Adrenal gland (tissue), 19 donors: ENCODE measurements at regions of chr11 and their contacts with region 1.

Region 1: DNA sequence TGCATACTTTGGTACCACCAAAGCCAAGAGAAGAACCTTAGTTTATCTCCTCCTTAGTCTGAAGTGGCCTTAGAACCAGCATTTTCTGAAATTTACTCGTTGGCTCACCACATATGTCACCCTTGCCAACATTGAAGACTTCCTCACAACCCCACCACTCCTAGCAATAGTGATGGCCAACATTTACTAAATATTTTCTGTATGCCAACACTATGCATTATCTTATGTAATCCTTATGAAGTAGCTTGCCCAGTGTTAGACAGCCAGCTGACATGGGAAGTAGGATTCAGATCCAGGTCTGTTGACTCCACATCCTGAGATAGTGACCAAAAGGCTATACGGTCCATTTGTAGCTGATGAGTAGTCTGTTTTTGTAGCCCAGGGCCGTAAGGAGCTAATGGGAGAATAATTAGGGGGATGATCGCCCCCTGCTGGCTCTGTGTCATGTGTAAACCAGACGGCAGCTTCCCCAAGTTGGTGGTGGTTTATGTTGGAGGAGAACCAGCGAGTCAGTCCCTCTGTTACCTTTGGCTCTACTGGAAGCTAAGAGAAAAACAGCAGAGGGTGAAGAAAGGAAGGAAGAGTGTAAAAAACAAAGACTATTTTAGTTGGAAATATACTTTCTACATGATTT is 120.5 kb upstream of the RASSF10 start:
- DNase-seq: peak; percentile 76 to 96 (median 90)
- H3K4me3 ChIP-seq: no peak overlapping the region
- H3K27ac ChIP-seq: peak overlapping the region in 2 of 5 donors; percentile 45 to 78
- H3K4me1 ChIP-seq: peaks cover 0 to 11% of the 10 kb centered on the region in 2 donors
- H3K27me3 ChIP-seq: no peaks in the 10 kb centered on the region
- CTCF ChIP-seq: peak; percentile 59 to 82 (median 72)
- POLR2A ChIP-seq: no peak

Region 2: DNA sequence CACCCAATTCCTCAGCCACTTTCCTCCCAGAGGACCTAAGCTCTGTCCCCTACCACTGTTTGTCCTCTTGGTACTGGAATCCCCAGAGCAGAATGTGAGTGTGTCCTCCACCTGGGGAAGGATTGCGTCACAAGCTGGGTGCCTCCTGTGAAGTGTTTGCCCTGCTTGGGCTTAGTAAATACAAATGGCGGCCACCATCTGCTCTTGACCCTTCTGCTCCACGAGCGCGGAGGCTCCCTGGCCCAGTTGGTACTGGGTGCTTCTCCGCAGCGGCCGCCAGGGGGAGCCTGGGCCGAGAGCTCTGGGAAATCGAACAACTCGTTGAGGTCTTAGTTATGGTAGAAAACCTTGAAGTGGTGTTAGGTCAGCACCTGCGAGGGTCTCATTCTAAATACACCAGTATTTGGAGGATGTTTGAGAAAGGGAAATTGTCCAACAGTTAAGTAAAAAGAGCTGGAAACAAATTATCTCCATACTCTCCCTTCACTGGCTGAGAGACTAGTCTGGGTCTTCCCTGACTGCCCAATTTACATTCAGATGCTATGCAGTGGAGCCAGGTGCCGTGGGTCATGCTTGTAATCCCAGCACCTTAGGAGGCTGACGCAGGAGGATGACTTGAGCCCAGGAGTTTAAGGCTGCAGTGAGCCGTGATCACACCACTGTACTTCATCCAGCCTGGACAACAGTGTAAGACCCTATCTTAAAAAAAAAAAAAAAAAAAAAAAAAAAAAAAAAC is 289.1 kb before region 1 on chr11:
- intact Hi-C with region 1: loop called (anchors 2 to 10 kb)
- DNase-seq: peak; percentile 56 to 78 (median 64)
- H3K4me3 ChIP-seq: no peak overlapping the region
- H3K27ac ChIP-seq: no peak overlapping the region
- H3K4me1 ChIP-seq: peaks cover 0 to 8% of the 10 kb centered on the region in 2 donors
- H3K27me3 ChIP-seq: no peaks in the 10 kb centered on the region
- CTCF ChIP-seq: peak; percentile 62 to 83 (median 78)
- POLR2A ChIP-seq: no peak

Region 3: GRCh38 chr11:12673924-12674570 is 214.6 kb before region 1 on chr11 and contains the start of gene TEAD1:
- intact Hi-C with region 1: loop called (anchors 10 kb)
- DNase-seq: peak; percentile 95 to 99 (median 98)
- H3K4me3 ChIP-seq: peak within 1 kb of the TSS; percentile 28 to 93 (median 67)
- H3K27ac ChIP-seq: peak within 1 kb of the TSS; percentile 84 to 100 (median 89)
- H3K4me1 ChIP-seq: peaks cover 9 to 23% of the 10 kb centered on the region in 2 donors
- H3K27me3 ChIP-seq: no peaks in the 10 kb centered on the region
- CTCF ChIP-seq: no peak
- POLR2A ChIP-seq: peak; percentile 86 to 94
- total RNA-seq, gene TEAD1: 24.1 to 49.9 (median 44.0) TPM

Region 4: DNA sequence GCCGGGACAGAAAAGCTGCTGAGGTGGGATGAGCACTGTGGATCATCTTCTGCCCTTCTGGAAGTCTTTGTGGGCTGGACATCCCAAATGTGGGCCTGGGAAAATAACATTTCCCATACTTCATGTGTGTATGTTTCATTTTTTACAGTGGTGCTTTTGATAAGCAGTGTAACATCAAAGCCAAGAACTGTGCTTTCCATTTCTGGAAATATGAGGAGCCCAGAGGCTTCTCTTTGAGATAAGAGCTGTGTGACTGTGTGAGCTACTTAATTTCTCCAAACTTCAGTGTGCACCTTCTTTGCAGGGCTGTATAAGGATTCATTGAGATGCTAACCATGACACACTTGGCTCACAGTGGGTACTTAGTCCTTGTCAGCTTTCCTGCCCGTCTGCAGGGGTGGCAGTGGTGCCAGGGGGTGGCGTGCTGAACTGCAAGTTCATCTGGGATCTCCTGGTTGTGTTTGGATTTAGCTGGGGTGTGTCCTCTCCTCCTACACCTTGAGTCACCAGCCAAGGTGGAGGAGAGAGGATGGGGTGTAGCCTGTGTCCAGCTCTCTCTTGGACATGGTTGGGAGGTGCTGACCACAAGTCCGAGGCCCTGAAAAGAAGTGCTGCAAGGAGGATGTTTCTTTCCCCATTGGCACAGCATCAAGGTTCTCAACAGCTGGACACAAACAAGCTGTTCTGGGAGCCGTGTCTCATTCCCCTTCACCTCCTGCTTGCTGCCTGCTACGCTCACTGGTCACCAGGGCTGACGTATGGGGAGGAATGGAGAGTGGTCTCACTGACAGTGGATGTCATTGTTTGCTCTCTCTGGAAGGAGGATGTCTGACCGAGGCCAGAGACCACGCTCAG is 75.0 kb before region 1 on chr11:
- intact Hi-C with region 1: loop called in 1 of 2 experiments (anchors 10 kb)
- DNase-seq: peak in 6 of 7 donors; percentile 41 to 67 (median 57)
- H3K4me3 ChIP-seq: no peak overlapping the region
- H3K27ac ChIP-seq: peak overlapping the region in 2 of 5 donors; percentile 74 to 86
- H3K4me1 ChIP-seq: peaks cover 20 to 30% of the 10 kb centered on the region in 2 donors
- H3K27me3 ChIP-seq: no peaks in the 10 kb centered on the region
- CTCF ChIP-seq: peak in 2 of 6 experiments; percentile 17 to 22
- POLR2A ChIP-seq: no peak

Region 5: DNA sequence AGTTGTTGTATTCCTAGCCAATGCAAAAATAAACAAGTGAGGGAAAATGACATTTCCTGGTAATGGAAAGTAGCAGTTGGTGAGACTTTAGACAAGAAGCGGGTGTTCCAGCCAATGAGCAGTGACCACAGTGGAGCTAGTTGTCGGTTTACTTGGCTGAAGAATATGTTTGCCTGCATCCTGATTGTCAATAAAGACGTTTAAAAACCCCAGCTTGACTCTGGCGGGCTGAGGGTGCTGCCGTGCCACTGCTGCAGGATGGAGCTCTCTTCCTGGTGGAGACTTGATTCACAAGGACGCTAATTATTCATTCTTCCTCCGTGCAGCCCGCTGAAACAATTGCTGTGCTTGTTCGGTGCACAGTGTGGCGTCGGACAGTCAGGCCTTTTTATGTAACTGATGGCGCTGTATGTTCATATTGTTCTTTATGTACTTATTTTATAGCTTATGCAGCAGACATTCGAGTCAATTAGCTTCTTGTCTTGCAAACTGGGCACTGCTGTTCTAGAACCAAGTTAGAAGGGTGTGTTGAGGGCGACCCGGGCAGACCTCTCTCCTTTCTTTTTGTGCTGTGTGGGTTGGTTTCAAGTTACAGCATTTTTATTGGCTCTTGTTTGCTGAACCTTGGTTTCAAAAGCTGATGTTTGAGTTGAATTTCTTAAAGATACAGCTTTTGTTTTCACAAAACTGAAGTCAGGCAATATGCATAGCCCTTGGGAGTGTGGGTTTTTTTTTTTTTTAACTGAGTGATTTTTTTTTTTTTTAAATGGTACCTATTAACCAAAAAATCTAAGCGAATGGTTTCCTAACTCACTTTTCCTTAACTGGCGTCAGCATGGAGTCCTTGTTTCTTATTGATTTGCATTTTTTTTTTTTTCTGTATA is 60.5 kb before region 1 on chr11:
- intact Hi-C with region 1: loop called in 1 of 2 experiments (anchors 10 kb)
- DNase-seq: peak; percentile 33 to 76 (median 55)
- H3K4me3 ChIP-seq: peak overlapping the region in 2 of 4 donors; percentile 42 to 52
- H3K27ac ChIP-seq: peak overlapping the region; percentile 19 to 82 (median 68)
- H3K4me1 ChIP-seq: peaks cover 19 to 42% of the 10 kb centered on the region in 2 donors
- H3K27me3 ChIP-seq: no peaks in the 10 kb centered on the region
- CTCF ChIP-seq: no peak
- POLR2A ChIP-seq: peak in 1 of 2 donors; percentile 69

Region 6: DNA sequence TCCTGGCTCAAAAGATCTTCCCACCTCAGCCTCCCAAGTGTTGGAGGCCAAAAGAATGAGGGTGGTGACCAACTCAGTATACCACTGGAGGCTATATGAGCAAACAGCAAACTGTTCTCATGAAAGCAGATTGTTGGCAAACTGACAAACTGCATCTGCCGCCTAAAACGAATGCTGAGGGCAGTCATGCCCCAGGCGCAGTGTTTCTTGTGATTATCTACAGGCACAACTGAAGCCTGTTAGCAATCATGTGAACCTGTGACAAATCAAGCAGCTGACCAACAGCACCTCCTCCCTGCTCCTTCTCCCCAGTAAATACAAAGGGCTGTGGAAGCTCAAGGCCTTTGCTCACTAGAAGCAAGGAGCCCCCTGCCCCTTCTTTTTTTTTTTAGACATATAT is 526.6 kb after region 1 on chr11:
- intact Hi-C with region 1: no loop called
- DNase-seq: peak in 1 of 7 donors; percentile 60
- H3K4me3 ChIP-seq: no peak overlapping the region
- H3K27ac ChIP-seq: no peak overlapping the region
- H3K4me1 ChIP-seq: no peaks in the 10 kb centered on the region
- H3K27me3 ChIP-seq: no peaks in the 10 kb centered on the region
- CTCF ChIP-seq: no peak
- POLR2A ChIP-seq: no peak